ENCODE measurements at regions of chr17 and their contacts with region 1.

Region 1: DNA sequence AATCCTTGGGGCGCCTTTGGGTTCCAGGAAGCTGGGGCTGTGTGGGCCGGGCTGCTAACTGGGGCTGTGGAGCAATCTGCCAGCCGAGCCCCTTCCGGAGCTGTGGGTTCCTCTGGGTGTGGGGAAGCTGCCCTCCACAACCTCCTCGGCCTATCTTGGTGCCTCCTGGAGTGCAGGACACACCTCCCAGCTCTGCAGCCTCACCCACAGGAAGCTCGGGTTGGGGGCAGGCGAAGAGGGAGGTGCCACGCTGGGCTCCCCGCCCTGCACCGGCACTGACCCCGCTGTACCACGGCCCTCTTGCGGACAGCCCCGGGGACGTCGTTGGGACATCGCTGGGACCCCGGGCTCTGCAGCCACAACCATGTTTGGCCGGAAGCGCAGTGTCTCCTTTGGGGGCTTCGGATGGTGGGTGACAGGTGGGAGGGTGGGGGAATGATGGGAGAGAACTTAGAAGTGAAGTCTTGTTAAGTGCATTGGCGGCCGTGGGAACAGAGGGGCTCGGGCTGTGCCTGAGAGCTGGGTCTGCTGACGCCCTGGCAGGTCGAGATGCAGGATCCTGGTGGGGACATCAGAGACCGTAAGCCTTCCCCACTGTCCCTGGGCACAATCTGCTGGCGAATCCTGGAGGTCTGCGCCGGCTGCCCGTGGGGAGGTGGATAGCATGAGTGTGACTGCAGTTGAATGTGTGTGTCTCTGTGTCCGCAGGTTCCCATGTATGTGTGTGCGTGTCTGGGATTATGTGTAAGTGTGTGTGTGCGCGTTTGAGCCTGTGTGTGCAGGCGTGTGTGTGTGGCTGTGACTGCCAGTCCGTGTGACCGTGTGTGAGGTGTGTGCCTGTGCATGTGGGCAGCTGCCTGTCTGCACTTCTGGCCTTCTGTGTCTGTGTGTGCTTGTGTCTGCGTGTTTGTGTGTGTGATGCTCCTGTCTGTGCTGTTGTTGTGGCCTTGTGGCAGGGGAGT is at the start of gene RAP1GAP2:
- DNase-seq: peak; percentile 75
- H3K4me3 Mint-ChIP-seq: peak within 1 kb of the TSS; percentile 72
- H3K27ac Mint-ChIP-seq: no peak within 1 kb of the TSS
- H3K4me1 Mint-ChIP-seq: peaks cover 65% of the 10 kb centered on the region
- H3K27me3 Mint-ChIP-seq: peaks cover 14% of the 10 kb centered on the region
- total RNA-seq, gene RAP1GAP2: 0.81 to 0.86 TPM

Region 2: DNA sequence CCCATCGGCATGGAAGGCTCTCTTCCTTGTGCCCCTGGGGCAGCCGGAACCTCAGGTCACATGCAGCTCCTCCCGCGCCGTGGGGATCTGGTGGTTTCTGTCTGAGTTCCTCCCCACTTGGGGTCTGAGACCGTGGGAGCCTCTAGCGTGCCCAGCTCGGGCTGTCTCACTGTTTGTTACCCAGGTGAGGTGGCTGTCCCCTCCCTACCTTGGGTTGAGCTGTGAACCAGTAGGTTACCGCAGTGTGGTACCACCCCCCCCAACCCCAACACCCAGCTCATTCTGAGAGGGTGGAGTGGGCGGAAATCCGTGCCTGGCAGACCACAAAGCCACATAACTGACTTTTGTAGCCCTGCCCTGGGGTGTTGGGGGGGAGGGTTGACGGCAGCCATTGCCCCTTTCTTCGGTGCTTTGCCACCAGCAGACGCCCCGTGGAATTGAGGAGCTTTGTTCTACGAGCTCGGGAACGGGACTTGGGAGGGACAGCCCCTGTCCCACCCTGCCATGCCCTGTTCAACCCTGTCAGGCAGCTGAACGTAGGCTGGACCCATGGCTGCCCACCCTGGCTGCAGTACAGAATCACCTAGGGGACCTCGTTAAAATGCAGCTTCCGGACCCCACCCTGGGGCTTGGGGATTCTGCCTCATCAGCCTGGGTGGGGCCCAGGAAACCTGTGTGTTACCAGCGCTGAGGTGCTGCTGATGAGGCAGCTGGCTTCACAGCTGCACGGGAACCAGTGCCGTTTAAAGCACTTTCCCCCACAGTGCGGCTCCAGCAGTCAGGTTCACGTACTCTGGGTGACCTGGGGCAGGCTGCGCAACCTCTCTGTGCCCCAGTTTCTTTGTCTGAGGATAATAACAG is 18.3 kb after region 1 on chr17:
- CTCF ChIA-PET with region 1: no interaction called
- intact Hi-C with region 1: loop called (anchors 2 kb)
- DNase-seq: peak; percentile 94
- H3K4me3 Mint-ChIP-seq: peak overlapping the region; percentile 43
- H3K27ac Mint-ChIP-seq: no peak overlapping the region
- H3K4me1 Mint-ChIP-seq: peaks cover 24% of the 10 kb centered on the region
- H3K27me3 Mint-ChIP-seq: peaks cover 9% of the 10 kb centered on the region